CD14-positive monocyte (primary cell): ENCODE measurements at regions of chr7 and their contacts with region 1.

Region 1: DNA sequence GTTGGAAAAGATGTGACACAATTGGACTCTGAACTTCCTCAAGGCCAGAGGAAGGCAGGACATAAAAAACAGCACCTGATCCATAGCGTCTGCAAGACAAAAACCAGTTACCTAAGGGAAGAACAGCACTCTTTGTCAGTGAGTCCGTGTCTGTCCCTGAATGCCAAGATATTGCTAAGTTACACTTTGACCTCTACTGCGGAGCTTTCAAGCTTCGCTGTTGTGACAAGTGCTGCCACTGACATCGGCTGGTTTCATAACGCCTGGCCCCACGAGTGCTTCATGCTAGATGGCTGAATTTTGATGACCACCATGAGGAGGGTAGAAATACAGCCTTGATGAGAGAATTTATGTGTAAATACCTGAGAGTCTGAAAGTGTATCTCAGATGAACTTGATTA is 49.7 kb upstream of the JAZF1 start:
- DNase-seq: no peak
- H3K4me3 ChIP-seq: no peak overlapping the region
- H3K4me3 Mint-ChIP-seq: no peak overlapping the region
- H3K27ac ChIP-seq: no peak overlapping the region
- H3K27ac Mint-ChIP-seq: no peak overlapping the region
- H3K4me1 ChIP-seq: peaks cover 6 to 7% of the 10 kb centered on the region in 2 donors
- H3K4me1 Mint-ChIP-seq: peaks cover 14% of the 10 kb centered on the region
- H3K27me3 ChIP-seq: no peaks in the 10 kb centered on the region
- H3K27me3 Mint-ChIP-seq: peaks cover 0 to 1% (median 0%) of the 10 kb centered on the region in 3 donors
- CTCF ChIP-seq: no peak

Region 2: DNA sequence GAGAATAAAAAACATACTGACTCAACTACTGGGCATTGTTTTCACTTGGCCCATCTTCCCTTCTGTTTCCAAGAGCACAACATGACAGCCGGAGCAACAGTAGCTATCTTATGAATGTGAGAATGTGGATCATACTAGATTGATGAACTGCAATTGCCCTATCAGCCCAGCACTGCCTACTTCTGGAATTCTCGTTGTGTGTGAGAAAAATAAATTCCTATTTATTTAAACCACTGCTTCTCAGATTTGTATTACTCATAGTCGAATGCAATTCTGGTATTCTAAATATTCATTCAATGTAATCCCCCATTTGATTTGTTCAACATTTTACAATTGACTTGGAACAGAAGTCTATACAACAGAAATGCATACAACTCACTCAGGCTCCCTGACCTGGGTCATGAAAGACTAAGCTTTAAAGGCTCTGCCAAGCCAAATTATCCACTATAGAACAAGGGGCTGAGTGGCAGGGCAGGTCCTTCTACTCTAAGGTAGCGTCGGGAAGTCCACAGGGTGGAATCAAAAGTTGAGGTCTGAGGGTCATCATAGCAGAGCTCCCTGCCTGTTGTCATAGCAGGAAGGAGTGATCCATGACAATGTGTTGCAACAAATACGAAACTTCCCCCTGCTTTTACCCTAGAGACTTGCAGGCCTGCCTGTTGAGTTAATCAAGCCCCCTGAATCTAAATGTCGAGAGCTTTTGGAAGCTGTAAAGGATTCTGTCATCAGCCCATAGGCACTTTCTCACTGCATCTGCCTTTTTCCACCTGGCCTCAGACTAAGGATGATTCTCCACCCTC is 37.3 kb before region 1 on chr7:
- intact Hi-C with region 1: loop called (anchors 5 to 10 kb)
- DNase-seq: peak; percentile 61 to 85 (median 68)
- H3K4me3 ChIP-seq: peak overlapping the region in 1 of 3 experiments; percentile 13
- H3K4me3 Mint-ChIP-seq: peak overlapping the region in 1 of 2 donors; percentile 58
- H3K27ac ChIP-seq: peak overlapping the region; percentile 9 to 75
- H3K27ac Mint-ChIP-seq: peak overlapping the region; percentile 80 to 96 (median 90)
- H3K4me1 ChIP-seq: peaks cover 29 to 36% of the 10 kb centered on the region in 2 donors
- H3K4me1 Mint-ChIP-seq: peaks cover 54% of the 10 kb centered on the region
- H3K27me3 ChIP-seq: no peaks in the 10 kb centered on the region
- H3K27me3 Mint-ChIP-seq: no peaks in the 10 kb centered on the region
- CTCF ChIP-seq: no peak